ENCODE measurements at regions of chr22 and their contacts with region 1.

Region 1: DNA sequence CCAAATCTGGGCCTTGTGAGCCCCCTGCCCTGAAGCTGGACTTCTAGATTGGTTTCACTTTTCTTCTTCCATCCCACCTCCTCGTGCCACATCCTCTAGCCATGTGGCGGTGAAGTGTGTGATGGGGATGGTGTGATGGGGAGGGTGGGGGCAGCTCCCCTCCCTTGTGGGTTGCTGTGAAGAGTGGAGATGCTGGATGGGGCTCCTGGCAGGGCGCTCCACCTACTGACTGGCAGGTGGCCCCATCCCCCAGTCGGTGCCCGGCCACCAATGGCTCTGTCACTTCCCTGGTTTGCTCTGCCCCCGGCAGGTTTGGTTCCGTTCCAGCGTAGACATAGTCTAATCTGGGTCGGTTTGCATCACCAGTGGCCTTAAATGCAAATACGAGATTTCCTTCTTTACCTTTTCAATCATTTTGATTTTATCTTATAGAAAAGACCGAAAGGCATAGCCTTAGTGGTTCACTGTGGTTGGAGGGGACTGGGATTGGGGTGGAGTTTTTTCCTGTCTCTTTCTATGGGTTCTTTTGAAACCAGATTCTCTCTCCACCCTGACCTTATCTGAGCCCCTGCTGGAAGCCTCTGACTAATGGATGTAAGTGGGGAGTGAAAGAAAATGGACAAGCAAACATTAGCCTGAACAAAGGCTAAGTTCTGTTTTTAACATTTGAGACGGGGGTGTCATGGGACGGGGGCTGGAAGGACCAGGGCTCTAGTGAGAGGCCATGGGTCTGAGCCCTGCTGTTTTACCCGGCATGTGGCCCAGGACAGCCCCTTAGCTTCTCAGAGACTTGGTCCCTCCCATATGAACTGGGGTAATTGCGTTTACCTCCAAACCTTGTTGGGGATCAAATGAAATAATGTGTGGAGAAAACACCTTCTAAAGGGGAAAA is 149.3 kb downstream of the CACNA1I start:
- DNase-seq: no peak
- H3K4me3 ChIP-seq: no peak overlapping the region
- H3K27ac ChIP-seq: no peak overlapping the region
- H3K4me1 ChIP-seq: no peaks in the 10 kb centered on the region
- H3K27me3 ChIP-seq: peaks cover 36% of the 10 kb centered on the region
- CTCF ChIP-seq: no peak

Region 2: GRCh38 chr22:39690881-39691605 is 28.8 kb before region 1 on chr22:
- CTCF ChIA-PET with region 1: no interaction called
- POLR2A ChIA-PET with region 1: interaction called, 12 read pairs
- intact Hi-C with region 1: no loop called
- DNase-seq: no peak
- H3K4me3 ChIP-seq: no peak overlapping the region
- H3K27ac ChIP-seq: no peak overlapping the region
- H3K4me1 ChIP-seq: 0 out of 2 replicates have a peak, but pooled peaks cover 4% of the 10 kb centered on the region
- H3K27me3 ChIP-seq: peaks cover 55% of the 10 kb centered on the region
- CTCF ChIP-seq: no peak